ENCODE measurements at regions of chr10 and their contacts with region 1.

Region 1: DNA sequence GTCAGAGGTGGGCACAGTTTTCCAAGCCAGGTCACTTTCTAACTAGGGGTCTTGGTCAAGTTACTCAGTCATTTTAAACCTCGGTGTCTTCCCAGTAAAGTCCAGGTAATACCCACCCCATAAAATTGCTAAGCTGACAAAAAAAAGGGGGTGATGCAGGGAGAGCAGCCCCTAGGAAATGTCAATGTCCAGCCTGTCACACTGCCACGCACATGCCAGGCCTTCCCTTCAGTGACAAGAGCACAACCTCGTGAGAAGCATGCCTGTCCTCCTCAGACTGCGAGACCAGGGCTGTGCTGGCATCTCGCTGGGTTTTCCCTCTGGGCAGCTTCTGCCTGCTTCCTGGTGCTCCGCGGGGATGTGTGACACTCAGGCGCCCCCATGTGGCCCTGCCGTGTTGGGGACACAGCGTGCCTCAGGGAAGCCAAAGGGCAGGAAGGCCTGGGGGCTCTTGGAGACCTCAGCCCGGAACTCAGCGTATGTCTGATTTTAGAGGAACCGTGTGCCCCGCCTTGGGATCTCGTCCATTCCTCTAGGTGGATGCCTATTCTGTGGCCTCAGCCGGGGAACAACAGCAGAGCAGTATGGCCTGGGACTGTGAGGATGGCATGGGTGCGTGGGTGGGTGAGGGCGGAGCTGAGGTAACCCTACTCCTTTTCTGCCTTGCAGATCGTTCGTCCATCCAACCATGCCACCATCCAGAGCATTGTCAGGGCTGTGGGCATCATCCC is 10.2 kb upstream of the GDF2 start:
- DNase-seq: peak; percentile 7
- ATAC-seq: peak; percentile 99
- H3K4me3 ChIP-seq: no peak overlapping the region
- H3K27ac ChIP-seq: no peak overlapping the region
- H3K4me1 ChIP-seq: no peaks in the 10 kb centered on the region
- H3K27me3 ChIP-seq: no peaks in the 10 kb centered on the region; a peak in 1 of 4 replicates
- CTCF ChIP-seq: peak; percentile 83 to 97 (median 93); a peak in 5 of 6 replicates
- EP300 ChIP-seq: no peak
- POLR2A ChIP-seq: no peak
- RAD21 ChIP-seq: peak; percentile 97

Region 2: DNA sequence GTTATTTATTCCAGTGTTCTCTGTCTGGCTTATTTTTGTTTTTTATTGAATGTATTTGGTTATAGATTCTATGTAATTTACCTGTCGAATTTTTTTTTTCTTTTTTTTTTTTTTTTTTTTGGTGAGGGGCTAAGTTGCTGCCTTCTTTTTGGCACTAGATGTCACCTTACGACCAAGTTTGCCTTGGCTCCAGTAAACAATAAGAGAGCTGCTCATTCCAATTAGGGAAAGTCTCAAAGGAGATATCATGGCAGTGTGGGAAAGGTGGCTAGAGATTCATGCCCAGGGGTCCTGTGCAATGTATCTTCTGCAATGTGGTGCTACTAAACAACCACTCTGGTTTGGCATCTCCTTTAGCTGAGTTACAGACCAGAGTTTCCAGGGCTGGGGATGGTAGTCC is 316.9 kb before region 1 on chr10:
- CTCF ChIA-PET with region 1: interaction called, 5 read pairs
- POLR2A ChIA-PET with region 1: no interaction called
- RAD21 ChIA-PET with region 1: interaction called, 5 read pairs
- SMC1A ChIA-PET with region 1: no interaction called
- in situ Hi-C with region 1: no loop called
- intact Hi-C with region 1: loop called (anchors 5 kb)
- DNase-seq: no peak
- ATAC-seq: no peak
- H3K4me3 ChIP-seq: no peak overlapping the region
- H3K27ac ChIP-seq: no peak overlapping the region
- H3K4me1 ChIP-seq: no peaks in the 10 kb centered on the region
- H3K27me3 ChIP-seq: no peaks in the 10 kb centered on the region; a peak in 1 of 4 replicates
- CTCF ChIP-seq: peak in 1 of 3 experiments; percentile 5; a peak in 1 of 6 replicates
- EP300 ChIP-seq: no peak
- POLR2A ChIP-seq: no peak
- RAD21 ChIP-seq: no peak

Region 3: GRCh38 chr10:47024399-47025252 is 287.5 kb before region 1 on chr10:
- CTCF ChIA-PET with region 1: interaction called, 45 read pairs
- POLR2A ChIA-PET with region 1: no interaction called
- RAD21 ChIA-PET with region 1: interaction called, 24 read pairs
- SMC1A ChIA-PET with region 1: interaction called, 20 read pairs
- in situ Hi-C with region 1: no loop called
- intact Hi-C with region 1: loop called (anchors 1 kb)
- DNase-seq: peak; percentile 16
- ATAC-seq: peak; percentile 97
- H3K4me3 ChIP-seq: no peak overlapping the region
- H3K27ac ChIP-seq: no peak overlapping the region
- H3K4me1 ChIP-seq: no peaks in the 10 kb centered on the region
- H3K27me3 ChIP-seq: no peaks in the 10 kb centered on the region; a peak in 2 of 4 replicates
- CTCF ChIP-seq: peak; percentile 91 to 94 (median 91)
- EP300 ChIP-seq: no peak
- POLR2A ChIP-seq: no peak
- RAD21 ChIP-seq: peak; percentile 82

Region 4: GRCh38 chr10:47297866-47298540 is 14.1 kb before region 1 on chr10:
- CTCF ChIA-PET with region 1: interaction called, 10 read pairs
- POLR2A ChIA-PET with region 1: no interaction called
- RAD21 ChIA-PET with region 1: interaction called, 4 read pairs
- SMC1A ChIA-PET with region 1: no interaction called
- in situ Hi-C with region 1: no loop called
- intact Hi-C with region 1: no loop called
- DNase-seq: no peak
- ATAC-seq: no peak
- H3K4me3 ChIP-seq: no peak overlapping the region
- H3K27ac ChIP-seq: no peak overlapping the region
- H3K4me1 ChIP-seq: no peaks in the 10 kb centered on the region
- H3K27me3 ChIP-seq: peaks cover 3 to 9% of the 10 kb centered on the region in 2 experiments; a peak in 3 of 4 replicates
- CTCF ChIP-seq: no peak
- EP300 ChIP-seq: no peak
- POLR2A ChIP-seq: no peak
- RAD21 ChIP-seq: no peak

Region 5: GRCh38 chr10:47322300-47323061 is 10.4 kb after region 1 on chr10 and contains the start of gene GDF2:
- CTCF ChIA-PET with region 1: interaction called, 7 read pairs
- POLR2A ChIA-PET with region 1: no interaction called
- RAD21 ChIA-PET with region 1: interaction called, 10 read pairs
- SMC1A ChIA-PET with region 1: no interaction called
- in situ Hi-C with region 1: no loop called
- intact Hi-C with region 1: no loop called
- DNase-seq: no peak
- ATAC-seq: no peak
- H3K4me3 ChIP-seq: no peak within 1 kb of the TSS
- H3K27ac ChIP-seq: no peak within 1 kb of the TSS
- H3K4me1 ChIP-seq: no peaks in the 10 kb centered on the region
- H3K27me3 ChIP-seq: no peaks in the 10 kb centered on the region; a peak in 1 of 4 replicates
- CTCF ChIP-seq: no peak
- EP300 ChIP-seq: no peak
- POLR2A ChIP-seq: no peak
- RAD21 ChIP-seq: no peak
- polyA plus RNA-seq, gene GDF2: not detected

Region 6: GRCh38 chr10:47332946-47333345 is 20.8 kb after region 1 on chr10:
- CTCF ChIA-PET with region 1: no interaction called
- POLR2A ChIA-PET with region 1: no interaction called
- RAD21 ChIA-PET with region 1: no interaction called
- SMC1A ChIA-PET with region 1: no interaction called
- in situ Hi-C with region 1: no loop called
- intact Hi-C with region 1: no loop called
- DNase-seq: no peak
- ATAC-seq: no peak
- H3K4me3 ChIP-seq: no peak overlapping the region
- H3K27ac ChIP-seq: no peak overlapping the region
- H3K4me1 ChIP-seq: no peaks in the 10 kb centered on the region
- H3K27me3 ChIP-seq: no peaks in the 10 kb centered on the region; a peak in 3 of 4 replicates
- CTCF ChIP-seq: no peak
- EP300 ChIP-seq: no peak
- POLR2A ChIP-seq: no peak
- RAD21 ChIP-seq: no peak

Measured in GM12878 (cell line).